H1 (cell line): ENCODE measurements at regions of chr2 and their contacts with region 1.

Region 1: GRCh38 chr2:106552921-106553320 is 65.8 kb downstream of the CD8B2 start:
- DNase-seq: no peak
- H3K4me3 ChIP-seq: no peak overlapping the region
- H3K27ac ChIP-seq: no peak overlapping the region
- H3K4me1 ChIP-seq: no peaks in the 10 kb centered on the region
- H3K27me3 ChIP-seq: no peaks in the 10 kb centered on the region
- CTCF ChIP-seq: no peak
- EP300 ChIP-seq: no peak
- POLR2A ChIP-seq: no peak
- RAD21 ChIP-seq: no peak

Region 2: GRCh38 chr2:106572541-106573450 is 19.9 kb after region 1 on chr2:
- CTCF ChIA-PET with region 1: interaction called, 12 read pairs
- POLR2A ChIA-PET with region 1: no interaction called
- DNase-seq: peak in 1 of 2 experiments; percentile 65
- H3K4me3 ChIP-seq: no peak overlapping the region
- H3K27ac ChIP-seq: no peak overlapping the region
- H3K4me1 ChIP-seq: peaks cover 2 to 4% (median 3%) of the 10 kb centered on the region in 4 experiments; a peak in 4 of 7 replicates
- H3K27me3 ChIP-seq: no peaks in the 10 kb centered on the region
- CTCF ChIP-seq: peak; percentile 58 to 84 (median 69)
- EP300 ChIP-seq: no peak
- POLR2A ChIP-seq: no peak
- RAD21 ChIP-seq: peak; percentile 51 to 66

Region 3: GRCh38 chr2:106582148-106583143 is 29.5 kb after region 1 on chr2:
- CTCF ChIA-PET with region 1: interaction called, 16 read pairs
- POLR2A ChIA-PET with region 1: no interaction called
- DNase-seq: peak; percentile 51 to 83
- H3K4me3 ChIP-seq: peak overlapping the region; percentile 20 to 57 (median 39); a peak in 6 of 8 replicates
- H3K27ac ChIP-seq: no peak overlapping the region
- H3K4me1 ChIP-seq: no peaks in the 10 kb centered on the region
- H3K27me3 ChIP-seq: peaks cover 2 to 31% (median 12%) of the 10 kb centered on the region in 4 experiments
- CTCF ChIP-seq: peak; percentile 80 to 94 (median 88)
- EP300 ChIP-seq: no peak
- POLR2A ChIP-seq: no peak
- RAD21 ChIP-seq: peak; percentile 91 to 96